Right ventricle myocardium superior (tissue), 1 donor: ENCODE measurements at regions of chr16 and their contacts with region 1.

Region 1: DNA sequence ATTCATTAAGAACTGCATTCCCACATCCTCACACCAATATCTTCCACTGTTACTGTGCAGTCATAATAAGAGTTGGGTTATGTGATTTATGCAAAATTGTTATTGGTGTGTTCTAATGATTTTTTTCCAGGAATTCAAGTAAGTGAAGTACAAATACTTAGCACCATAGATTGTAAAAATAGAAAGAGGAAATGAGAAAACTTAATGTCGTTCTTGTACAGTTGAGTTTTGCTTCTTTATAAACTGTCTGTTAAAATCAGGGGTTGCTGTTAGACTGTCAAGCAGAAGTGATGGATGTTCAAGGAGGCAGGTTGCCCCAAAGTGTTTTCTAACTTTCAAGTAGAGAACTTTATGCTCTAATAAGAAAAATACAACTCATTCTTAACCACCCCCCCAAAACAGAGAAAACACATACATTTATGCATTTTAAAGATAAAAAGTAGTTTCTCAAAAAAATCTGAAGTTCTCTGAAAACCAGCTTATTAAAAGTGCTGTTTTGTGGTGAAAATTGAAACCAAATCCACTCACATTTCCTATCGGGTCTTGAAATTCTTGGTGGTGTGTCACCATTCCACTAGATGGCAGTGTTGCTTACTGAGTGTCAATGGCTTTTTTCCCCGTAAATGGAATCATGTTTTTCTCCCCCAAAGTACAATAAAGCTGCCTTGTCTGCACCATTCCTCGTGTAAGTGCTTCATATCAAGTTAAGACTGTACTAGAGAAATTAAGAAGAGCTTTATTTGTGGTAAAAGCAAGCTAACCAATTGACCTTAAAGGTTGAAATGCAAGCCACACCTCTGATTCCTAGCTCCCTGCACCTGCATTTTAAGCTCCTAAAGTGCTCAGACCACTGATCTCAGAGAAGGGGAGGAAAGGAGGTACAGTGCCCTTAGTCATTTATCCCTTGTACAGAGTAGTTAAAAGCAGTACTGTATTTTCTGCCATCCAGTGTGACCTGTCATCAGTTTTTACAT is 4.7 kb upstream of the IGSF6 start:
- DNase-seq: no peak
- ATAC-seq: no peak

Region 2: DNA sequence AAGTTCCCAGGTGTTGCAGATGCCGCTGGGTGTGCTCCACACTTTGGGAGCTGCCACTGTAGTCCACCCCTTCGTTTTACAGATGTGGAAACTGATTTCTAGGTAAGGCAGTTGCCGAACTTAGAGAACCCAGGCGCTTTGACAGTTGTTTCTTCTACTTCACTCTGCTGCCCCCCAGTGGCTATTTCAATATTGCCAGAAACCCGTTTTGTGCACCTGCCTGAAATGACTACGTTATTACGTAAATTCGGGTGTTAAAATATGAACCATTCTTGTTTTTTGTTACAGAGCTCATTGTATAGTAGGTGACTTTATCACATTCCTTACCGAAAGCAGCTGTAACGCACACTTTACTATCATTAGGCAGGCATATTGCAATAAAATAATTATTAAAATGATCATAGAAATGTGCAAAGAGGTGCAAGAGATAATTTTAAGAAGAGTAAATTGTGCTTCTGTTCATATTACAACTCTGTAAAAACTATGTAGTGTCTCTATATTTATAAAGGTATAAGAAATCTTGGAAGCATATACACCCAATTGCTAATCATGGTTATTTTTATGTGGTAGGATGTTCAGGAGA is 51.5 kb after region 1 on chr16:
- intact Hi-C with region 1: loop called (anchors 5 kb)
- DNase-seq: peak; percentile 66
- ATAC-seq: peak; percentile 51